Left ventricle myocardium superior (tissue), 1 donor: ENCODE measurements at regions of chr3 and their contacts with region 1.

Region 1: DNA sequence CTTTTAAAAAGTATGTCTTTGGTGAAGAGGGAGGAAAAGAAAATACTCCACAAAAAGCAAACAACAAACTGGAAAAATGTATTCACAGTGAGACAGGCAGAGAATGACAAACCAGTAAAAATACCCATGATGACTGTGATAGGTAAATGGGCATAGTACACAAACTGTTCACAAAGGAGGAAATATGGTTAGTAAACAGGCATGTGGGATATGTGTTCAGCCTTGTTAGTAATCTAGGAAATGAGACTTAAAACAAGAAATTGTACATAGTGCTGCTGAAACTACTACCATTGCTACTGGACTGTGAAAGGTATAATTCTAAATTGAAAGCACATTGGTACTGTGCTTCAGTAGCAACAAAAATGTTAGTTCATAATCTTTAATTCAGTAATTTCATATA is 50.1 kb downstream of the UBE2E2 start:
- DNase-seq: no peak
- ATAC-seq: no peak

Region 2: DNA sequence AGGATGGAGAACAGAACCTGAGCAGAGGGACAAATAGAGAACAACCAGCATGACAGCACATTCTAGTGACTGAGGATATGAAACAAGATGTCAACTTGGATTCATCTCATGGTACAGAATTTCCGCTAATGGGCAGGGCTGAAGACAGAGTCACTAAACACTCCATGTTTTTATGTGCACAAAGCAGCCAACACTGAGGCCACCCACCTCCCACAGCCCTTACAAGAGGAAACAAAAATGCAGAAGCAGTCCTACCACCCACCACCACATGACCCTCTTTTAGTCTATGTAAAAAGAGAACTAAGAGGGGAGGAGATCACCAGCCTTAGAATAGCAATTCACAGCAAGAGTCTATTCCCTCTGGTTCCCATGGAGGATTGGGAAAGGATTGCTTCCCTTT is 181.5 kb before region 1 on chr3:
- intact Hi-C with region 1: no loop called
- DNase-seq: no peak
- ATAC-seq: peak; percentile 65

Region 3: GRCh38 chr3:24119321-24119751 is 866.1 kb after region 1 on chr3:
- intact Hi-C with region 1: loop called (anchors 10 kb)
- DNase-seq: no peak
- ATAC-seq: peak; percentile 23